ENCODE measurements at regions of chr17 and their contacts with region 1.

Region 1: DNA sequence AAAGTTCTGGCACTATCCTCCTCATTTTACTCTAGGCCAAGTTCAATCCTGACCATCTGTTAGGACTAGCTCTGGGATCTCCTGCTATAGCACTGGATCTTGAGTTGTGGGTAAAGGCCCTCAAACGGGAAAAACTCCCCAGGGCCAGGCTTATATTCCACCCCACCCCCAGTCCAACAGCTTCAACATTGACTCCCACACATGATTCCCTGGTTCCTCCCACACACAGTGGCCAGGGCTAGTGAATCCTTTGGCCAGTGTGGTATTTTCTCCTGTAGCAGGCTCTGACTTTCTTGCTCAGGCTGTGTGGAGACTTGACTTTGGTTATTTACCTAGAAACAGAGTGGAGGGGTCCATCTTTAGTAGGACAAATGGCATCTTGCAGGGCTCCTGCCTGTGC is 10.3 kb upstream of the AKAP10 start:
- DNase-seq: no peak
- CTCF ChIP-seq: no peak

Region 2: GRCh38 chr17:20121359-20122253 is 133.7 kb after region 1 on chr17:
- CTCF ChIA-PET with region 1: interaction called, 70 read pairs
- POLR2A ChIA-PET with region 1: no interaction called
- DNase-seq: peak; percentile 76
- CTCF ChIP-seq: peak; percentile 79

Measured in GM10248 (cell line).